Activated CD4-positive, alpha-beta memory T cell treated with anti-CD3 and anti-CD28 coated beads for 36 hours (primary cell): ENCODE measurements at regions of chr2 and their contacts with region 1.

Region 1: DNA sequence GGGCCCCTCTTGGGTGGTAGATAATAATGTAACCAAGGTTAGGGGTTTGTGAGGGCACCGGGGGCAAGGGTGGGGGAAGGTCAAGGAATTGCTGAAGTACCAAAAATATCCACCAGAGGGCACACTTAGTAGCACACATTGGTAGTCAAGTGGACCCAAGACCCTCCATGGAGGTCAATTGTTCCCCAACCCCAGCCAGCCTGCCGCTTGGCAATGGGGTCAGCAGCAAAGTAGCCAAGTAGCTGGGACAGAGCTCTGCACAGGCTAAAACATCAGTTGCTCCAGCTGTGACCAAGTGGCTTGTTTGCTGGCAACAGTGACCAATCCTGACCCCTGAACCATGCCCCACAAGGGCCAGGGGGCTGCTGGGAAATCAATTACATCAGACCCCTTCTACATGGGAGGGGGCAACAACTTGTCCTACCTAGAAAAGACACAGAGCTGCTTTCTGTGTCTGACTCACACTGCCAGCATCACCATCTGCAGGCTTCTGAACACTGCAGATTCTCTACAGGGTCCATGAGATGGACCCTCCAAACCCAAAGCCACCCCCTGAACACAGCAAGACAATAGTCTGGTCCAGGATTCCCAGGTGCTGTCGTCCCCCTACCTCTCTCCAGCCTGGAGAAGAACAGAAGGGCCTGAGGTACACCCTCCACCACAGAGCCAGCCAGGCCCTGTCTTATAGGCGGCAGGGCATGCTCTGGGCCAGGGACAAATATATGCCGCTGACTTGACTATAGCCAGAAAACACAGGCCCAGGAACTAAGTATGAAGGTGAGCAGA is 76.0 kb downstream of the EMX1 start:
- DNase-seq: peak; percentile 40
- H3K4me3 Mint-ChIP-seq: no peak overlapping the region
- H3K27ac Mint-ChIP-seq: no peak overlapping the region
- H3K4me1 Mint-ChIP-seq: no peaks in the 10 kb centered on the region
- H3K27me3 Mint-ChIP-seq: no peaks in the 10 kb centered on the region

Region 2: GRCh38 chr2:72963423-72964145 is 29.8 kb before region 1 on chr2:
- CTCF ChIA-PET with region 1: no interaction called
- POLR2A ChIA-PET with region 1: no interaction called
- intact Hi-C with region 1: no loop called
- DNase-seq: no peak
- H3K4me3 Mint-ChIP-seq: no peak overlapping the region
- H3K27ac Mint-ChIP-seq: no peak overlapping the region
- H3K4me1 Mint-ChIP-seq: no peaks in the 10 kb centered on the region
- H3K27me3 Mint-ChIP-seq: no peaks in the 10 kb centered on the region

Region 3: DNA sequence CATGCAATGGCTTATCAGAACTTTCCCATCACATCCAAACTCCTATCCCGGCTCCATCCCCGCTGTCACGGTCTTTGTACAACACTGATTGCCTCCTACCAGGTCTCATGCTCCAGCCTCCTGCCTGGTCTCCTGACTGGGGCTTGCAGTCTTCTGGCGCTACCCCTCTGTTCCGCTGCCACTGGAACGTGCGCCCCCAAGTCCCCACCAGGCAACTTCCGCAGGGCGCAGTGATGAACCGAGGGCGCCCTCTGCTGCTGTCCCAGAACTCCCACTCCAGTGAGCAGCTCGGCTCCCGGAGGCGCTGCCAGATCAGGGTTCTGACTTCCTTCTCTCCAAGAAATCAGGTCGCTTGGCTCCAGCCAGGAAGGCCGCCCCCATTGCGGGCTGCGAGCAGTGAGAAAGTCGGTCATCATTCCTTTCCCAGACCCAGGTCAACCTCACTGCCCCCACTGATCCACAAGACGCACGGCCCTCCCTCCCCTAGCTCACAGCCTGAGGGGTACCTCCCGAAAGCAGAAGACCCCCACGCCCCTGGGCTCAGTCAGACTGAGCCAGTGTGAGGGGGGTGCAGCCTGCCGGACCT is 163.3 kb after region 1 on chr2:
- CTCF ChIA-PET with region 1: interaction called, 24 read pairs
- POLR2A ChIA-PET with region 1: no interaction called
- intact Hi-C with region 1: no loop called
- DNase-seq: peak; percentile 59
- H3K4me3 Mint-ChIP-seq: no peak overlapping the region
- H3K27ac Mint-ChIP-seq: no peak overlapping the region
- H3K4me1 Mint-ChIP-seq: no peaks in the 10 kb centered on the region
- H3K27me3 Mint-ChIP-seq: peaks cover 27% of the 10 kb centered on the region

Region 4: DNA sequence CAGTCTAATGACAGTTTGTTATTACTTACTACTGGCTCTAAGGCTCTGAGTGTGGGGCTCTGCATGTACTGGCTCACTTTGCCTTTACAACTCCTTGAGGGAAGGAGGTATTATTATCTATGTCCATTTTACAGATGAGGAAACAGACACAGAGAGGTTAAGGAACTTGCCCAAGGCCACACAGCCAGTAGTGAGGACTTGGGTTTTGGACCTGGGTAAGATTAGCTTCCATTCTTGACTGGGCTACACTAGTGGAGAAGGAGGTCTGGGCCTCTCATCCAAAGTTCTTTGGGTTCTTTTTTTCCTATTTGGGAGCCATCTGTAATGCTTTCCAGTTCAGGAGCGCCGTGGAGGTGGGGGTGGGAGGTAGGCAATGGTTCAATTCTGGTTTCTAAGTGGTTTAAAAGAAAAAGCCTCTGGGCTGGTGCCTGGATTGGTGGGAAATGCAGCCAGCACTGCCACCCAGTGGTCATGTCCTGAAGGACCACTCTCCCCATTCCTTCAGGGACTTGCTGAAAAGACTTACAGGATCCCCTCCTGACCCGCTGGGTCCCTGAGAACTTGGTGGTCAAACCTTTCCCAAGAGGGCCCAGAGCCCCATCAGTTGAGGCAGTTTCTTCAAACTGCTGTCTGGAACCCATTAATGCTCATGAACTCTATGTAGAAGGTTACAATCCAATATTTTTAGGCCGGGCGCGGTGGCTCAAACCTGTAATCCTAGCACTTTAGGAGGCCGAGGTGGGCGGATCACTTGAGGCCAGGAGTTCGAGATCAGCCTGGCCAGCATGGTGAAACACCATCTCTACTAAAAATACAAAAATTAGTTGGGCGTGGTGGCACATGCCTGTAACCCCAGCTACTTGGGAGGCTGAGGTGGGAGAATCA is 170.4 kb after region 1 on chr2:
- CTCF ChIA-PET with region 1: interaction called, 6 read pairs
- POLR2A ChIA-PET with region 1: no interaction called
- intact Hi-C with region 1: loop called (anchors 1 kb)
- DNase-seq: peak; percentile 81
- H3K4me3 Mint-ChIP-seq: no peak overlapping the region
- H3K27ac Mint-ChIP-seq: no peak overlapping the region
- H3K4me1 Mint-ChIP-seq: peaks cover 2% of the 10 kb centered on the region
- H3K27me3 Mint-ChIP-seq: peaks cover 7% of the 10 kb centered on the region

Region 5: DNA sequence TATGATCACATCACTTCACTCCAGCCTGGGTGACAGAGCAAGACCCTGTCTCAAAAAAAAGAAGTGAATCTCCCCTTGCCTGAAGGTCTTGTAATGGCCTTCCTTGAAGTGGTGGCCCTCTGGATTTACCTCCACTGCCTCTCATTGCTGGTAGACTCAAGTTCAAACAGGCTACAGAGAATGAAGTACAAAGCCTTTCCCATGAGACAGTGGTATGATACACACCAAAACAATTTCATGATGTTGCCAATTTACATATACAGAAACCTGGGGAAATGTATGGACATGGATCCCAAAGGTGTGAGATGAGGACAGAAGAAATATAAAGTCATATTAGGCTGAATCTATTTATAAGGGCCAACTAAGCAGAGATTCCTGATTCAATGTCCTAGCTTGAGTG is 204.2 kb after region 1 on chr2:
- CTCF ChIA-PET with region 1: no interaction called
- POLR2A ChIA-PET with region 1: no interaction called
- intact Hi-C with region 1: no loop called
- DNase-seq: no peak
- H3K4me3 Mint-ChIP-seq: no peak overlapping the region
- H3K27ac Mint-ChIP-seq: no peak overlapping the region
- H3K4me1 Mint-ChIP-seq: peaks cover 5% of the 10 kb centered on the region
- H3K27me3 Mint-ChIP-seq: peaks cover 24% of the 10 kb centered on the region